ENCODE measurements at regions of chr2 and their contacts with region 1.

Region 1: GRCh38 chr2:95043300-95044093 is 18.0 kb downstream of the MAL start:
- DNase-seq: peak in 1 of 10 donors; percentile 28
- ATAC-seq: peak; percentile 46 to 48
- H3K4me3 Mint-ChIP-seq: peak overlapping the region in 6 of 10 donors; percentile 23 to 69 (median 42)
- H3K27ac Mint-ChIP-seq: peak overlapping the region; percentile 66 to 92 (median 81)
- H3K4me1 Mint-ChIP-seq: peaks cover 49 to 98% (median 89%) of the 10 kb centered on the region in 4 donors
- H3K27me3 Mint-ChIP-seq: no peaks in the 10 kb centered on the region

Region 2: GRCh38 chr2:95012881-95013550 is 30.5 kb before region 1 on chr2:
- POLR2A ChIA-PET with region 1: no interaction called
- DNase-seq: no peak
- ATAC-seq: no peak
- H3K4me3 Mint-ChIP-seq: no peak overlapping the region
- H3K27ac Mint-ChIP-seq: peak overlapping the region in 1 of 10 donors; percentile 88
- H3K4me1 Mint-ChIP-seq: peaks cover 0 to 5% (median 2%) of the 10 kb centered on the region in 4 donors
- H3K27me3 Mint-ChIP-seq: peaks cover 0 to 1% (median 0%) of the 10 kb centered on the region in 5 donors

Region 3: GRCh38 chr2:95053543-95053942 is 10.0 kb after region 1 on chr2:
- POLR2A ChIA-PET with region 1: interaction called, 29 read pairs
- DNase-seq: peak in 2 of 10 donors; percentile 43 to 46
- ATAC-seq: peak; percentile 47 to 61
- H3K4me3 Mint-ChIP-seq: peak overlapping the region in 9 of 10 donors; percentile 35 to 78 (median 68)
- H3K27ac Mint-ChIP-seq: peak overlapping the region; percentile 88 to 96 (median 94)
- H3K4me1 Mint-ChIP-seq: peaks cover 40 to 80% (median 70%) of the 10 kb centered on the region in 4 donors
- H3K27me3 Mint-ChIP-seq: no peaks in the 10 kb centered on the region

Region 4: GRCh38 chr2:95179451-95179850 is 136.0 kb after region 1 on chr2:
- POLR2A ChIA-PET with region 1: no interaction called
- DNase-seq: no peak
- ATAC-seq: no peak
- H3K4me3 Mint-ChIP-seq: no peak overlapping the region
- H3K27ac Mint-ChIP-seq: no peak overlapping the region
- H3K4me1 Mint-ChIP-seq: peaks cover 0 to 3% (median 1%) of the 10 kb centered on the region in 4 donors
- H3K27me3 Mint-ChIP-seq: no peaks in the 10 kb centered on the region

Measured in naive thymus-derived CD8-positive, alpha-beta T cell (primary cell).